IMR-90 (cell line): ENCODE measurements at regions of chr3 and their contacts with region 1.

Region 1: DNA sequence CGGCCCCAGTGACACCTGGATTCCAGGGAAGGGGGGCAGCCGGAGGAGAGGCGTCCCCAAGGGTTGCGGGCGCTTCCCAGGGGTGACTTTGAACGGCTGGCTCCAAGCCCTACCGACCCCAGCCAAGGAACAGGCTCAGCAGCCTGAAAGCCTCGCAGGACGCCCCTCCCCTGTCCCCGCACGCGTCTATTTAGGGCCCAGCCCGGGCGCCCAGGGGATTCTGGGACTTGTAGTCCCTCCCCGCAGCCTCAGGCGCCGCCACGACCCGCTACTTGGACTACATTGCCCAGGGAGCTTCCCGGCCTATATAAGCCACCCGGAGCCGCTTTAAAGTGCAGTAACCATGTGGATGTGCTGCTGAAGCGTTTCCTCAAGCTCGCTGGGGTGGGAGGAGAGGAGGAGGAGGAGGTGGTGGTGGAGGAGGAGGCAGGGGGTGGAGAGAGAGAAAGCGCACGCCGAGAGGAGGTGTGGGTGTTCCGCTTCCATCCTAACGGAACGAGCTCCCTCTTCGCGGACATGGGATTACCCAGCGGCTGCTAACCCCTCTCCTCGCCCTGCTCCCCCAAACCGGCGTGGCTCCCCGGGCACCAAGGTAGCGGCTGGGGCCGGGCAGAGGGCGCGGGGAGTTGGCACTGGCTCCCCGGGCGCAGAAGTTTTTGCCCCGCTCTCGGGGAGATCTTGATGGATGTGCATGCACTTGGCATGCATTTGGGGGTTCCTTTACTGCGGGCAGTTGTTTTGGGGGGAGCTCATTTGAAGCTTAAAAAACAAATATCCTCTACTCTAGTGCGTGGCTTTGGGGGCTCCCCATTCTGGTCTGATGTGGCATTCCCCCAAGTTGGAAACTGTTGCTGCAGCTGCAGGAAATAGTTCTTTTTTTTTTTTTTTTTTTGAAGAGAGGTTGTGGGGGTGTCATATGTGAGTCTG is at the start of gene ITPR1:
- DNase-seq: peak; percentile 98
- ATAC-seq: peak; percentile 96
- H3K4me3 ChIP-seq: peak within 1 kb of the TSS; percentile 62
- H3K27ac ChIP-seq: peak within 1 kb of the TSS; percentile 67
- H3K4me1 ChIP-seq: no peaks in the 10 kb centered on the region; the same call in 1 of the 2 replicates
- H3K27me3 ChIP-seq: no peaks in the 10 kb centered on the region
- CTCF ChIP-seq: no peak
- POLR2A ChIP-seq: peak; percentile 99
- RAD21 ChIP-seq: no peak
- total RNA-seq, gene ITPR1: 5.7 and 5.8 TPM in 2 replicates

Region 2: GRCh38 chr3:4303187-4304123 is 189.8 kb before region 1 on chr3 and contains the start of gene SETMAR:
- CTCF ChIA-PET with region 1: no interaction called
- POLR2A ChIA-PET with region 1: no interaction called
- dilution Hi-C with region 1: no loop called
- in situ Hi-C with region 1: no loop called
- intact Hi-C with region 1: loop called (anchors 5 kb)
- DNase-seq: peak; percentile 78
- ATAC-seq: peak; percentile 94
- H3K4me3 ChIP-seq: peak within 1 kb of the TSS; percentile 68
- H3K27ac ChIP-seq: peak within 1 kb of the TSS; percentile 93
- H3K4me1 ChIP-seq: 0 out of 2 replicates have a peak, but pooled peaks cover 2% of the 10 kb centered on the region
- H3K27me3 ChIP-seq: no peaks in the 10 kb centered on the region
- CTCF ChIP-seq: no peak
- POLR2A ChIP-seq: peak; percentile 56; the same call in 1 of the 2 replicates
- RAD21 ChIP-seq: no peak
- total RNA-seq, gene SETMAR: 17.8 and 18.1 TPM in 2 replicates

Region 3: DNA sequence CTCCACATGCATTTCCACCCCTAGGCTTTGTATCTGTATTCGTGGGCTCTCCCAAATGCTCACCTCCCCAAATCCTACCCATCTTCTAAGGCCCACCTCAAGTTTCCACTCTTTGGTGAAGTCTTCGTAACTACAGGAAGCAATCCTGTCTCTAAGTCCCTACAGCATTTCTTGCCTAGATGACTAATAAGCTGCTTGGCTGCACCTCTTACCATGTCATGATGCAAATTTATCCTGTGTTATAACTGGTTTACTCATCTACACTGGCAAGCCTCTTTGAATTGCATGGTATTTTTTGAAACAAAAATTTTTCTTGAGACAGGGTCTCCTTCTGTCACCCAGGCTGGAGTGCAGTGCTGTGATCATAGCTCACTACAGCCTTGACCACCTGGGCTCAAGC is 116.8 kb before region 1 on chr3:
- CTCF ChIA-PET with region 1: no interaction called
- POLR2A ChIA-PET with region 1: no interaction called
- dilution Hi-C with region 1: no loop called
- in situ Hi-C with region 1: no loop called
- intact Hi-C with region 1: no loop called
- DNase-seq: peak; percentile 31
- ATAC-seq: no peak; the same call in 1 of the 2 replicates
- H3K4me3 ChIP-seq: no peak overlapping the region
- H3K27ac ChIP-seq: no peak overlapping the region
- H3K4me1 ChIP-seq: no peaks in the 10 kb centered on the region
- H3K27me3 ChIP-seq: no peaks in the 10 kb centered on the region
- CTCF ChIP-seq: no peak
- POLR2A ChIP-seq: no peak
- RAD21 ChIP-seq: no peak

Region 4: GRCh38 chr3:4466741-4467521 is 26.3 kb before region 1 on chr3 and contains the start of gene SUMF1:
- CTCF ChIA-PET with region 1: no interaction called
- POLR2A ChIA-PET with region 1: interaction called, 5 read pairs
- dilution Hi-C with region 1: no loop called
- in situ Hi-C with region 1: no loop called
- intact Hi-C with region 1: loop called (anchors 2 kb)
- DNase-seq: peak; percentile 70
- ATAC-seq: peak; percentile 98
- H3K4me3 ChIP-seq: peak within 1 kb of the TSS; percentile 56
- H3K27ac ChIP-seq: peak within 1 kb of the TSS; percentile 64
- H3K4me1 ChIP-seq: no peaks in the 10 kb centered on the region
- H3K27me3 ChIP-seq: peaks cover 6% of the 10 kb centered on the region; the same call in 1 of the 2 replicates
- CTCF ChIP-seq: no peak
- POLR2A ChIP-seq: peak; percentile 80; the same call in 1 of the 2 replicates
- RAD21 ChIP-seq: no peak
- total RNA-seq, gene SUMF1: 25.0 and 26.3 TPM in 2 replicates

Region 5: GRCh38 chr3:4584456-4585249 is 91.4 kb after region 1 on chr3:
- CTCF ChIA-PET with region 1: interaction called, 3 read pairs
- POLR2A ChIA-PET with region 1: no interaction called
- dilution Hi-C with region 1: no loop called
- in situ Hi-C with region 1: no loop called
- intact Hi-C with region 1: loop called (anchors 1 kb)
- DNase-seq: peak; percentile 16
- ATAC-seq: no peak
- H3K4me3 ChIP-seq: peak overlapping the region; percentile 45
- H3K27ac ChIP-seq: peak overlapping the region; percentile 84; the same call in 1 of the 2 replicates
- H3K4me1 ChIP-seq: peaks cover 15% of the 10 kb centered on the region
- H3K27me3 ChIP-seq: no peaks in the 10 kb centered on the region
- CTCF ChIP-seq: 0 out of 2 replicates have a peak, but pooled peaks have one; percentile 15
- POLR2A ChIP-seq: no peak
- RAD21 ChIP-seq: peak; percentile 23

Region 6: GRCh38 chr3:4633078-4634004 is 140.1 kb after region 1 on chr3:
- CTCF ChIA-PET with region 1: interaction called, 3 read pairs
- POLR2A ChIA-PET with region 1: no interaction called
- dilution Hi-C with region 1: no loop called
- in situ Hi-C with region 1: no loop called
- intact Hi-C with region 1: loop called (anchors 1 kb)
- DNase-seq: peak; percentile 72
- ATAC-seq: peak; percentile 92
- H3K4me3 ChIP-seq: no peak overlapping the region
- H3K27ac ChIP-seq: no peak overlapping the region
- H3K4me1 ChIP-seq: no peaks in the 10 kb centered on the region
- H3K27me3 ChIP-seq: no peaks in the 10 kb centered on the region
- CTCF ChIP-seq: peak; percentile 87
- POLR2A ChIP-seq: no peak
- RAD21 ChIP-seq: peak; percentile 85

Region 7: DNA sequence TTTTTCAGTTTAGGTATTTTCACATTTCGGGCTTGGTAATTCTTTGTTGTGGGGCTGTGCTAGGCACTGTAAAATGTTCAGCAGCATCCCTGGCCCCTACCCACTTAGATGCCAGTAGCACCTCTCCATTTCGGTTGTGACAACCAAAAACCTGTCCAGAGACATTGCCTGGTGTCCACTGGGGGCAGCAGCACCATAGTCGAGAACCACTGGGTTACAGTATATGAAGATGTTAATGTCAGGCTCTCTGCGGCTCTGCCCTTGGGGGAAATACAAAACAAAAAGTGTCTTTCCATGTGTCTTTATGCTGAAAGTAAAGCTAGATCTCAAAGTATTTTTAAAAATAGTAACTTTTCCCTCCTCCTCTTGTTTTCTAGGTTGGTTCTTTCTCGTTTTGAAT is 177.1 kb after region 1 on chr3:
- CTCF ChIA-PET with region 1: no interaction called
- POLR2A ChIA-PET with region 1: no interaction called
- dilution Hi-C with region 1: no loop called
- in situ Hi-C with region 1: no loop called
- intact Hi-C with region 1: no loop called
- DNase-seq: no peak
- ATAC-seq: no peak
- H3K4me3 ChIP-seq: no peak overlapping the region
- H3K27ac ChIP-seq: no peak overlapping the region
- H3K4me1 ChIP-seq: no peaks in the 10 kb centered on the region
- H3K27me3 ChIP-seq: no peaks in the 10 kb centered on the region
- CTCF ChIP-seq: peak; percentile 33
- POLR2A ChIP-seq: no peak
- RAD21 ChIP-seq: peak; percentile 33; the same call in 1 of the 2 replicates